HAP-1 (cell line): ENCODE measurements at regions of chr6 and their contacts with region 1.

Region 1: GRCh38 chr6:107689951-107690642 is 134.0 kb downstream of the SCML4 start:
- DNase-seq: peak in 1 of 2 experiments; percentile 21
- H3K4me3 ChIP-seq: no peak overlapping the region
- H3K4me1 ChIP-seq: no peaks in the 10 kb centered on the region
- H3K27me3 ChIP-seq: no peaks in the 10 kb centered on the region

Region 2: GRCh38 chr6:107847844-107848802 is 158.0 kb after region 1 on chr6:
- in situ Hi-C with region 1: loop called (anchors 10 kb)
- DNase-seq: peak; percentile 82 to 94
- H3K4me3 ChIP-seq: peak overlapping the region; percentile 18
- H3K4me1 ChIP-seq: peaks cover 6% of the 10 kb centered on the region
- H3K27me3 ChIP-seq: no peaks in the 10 kb centered on the region

Region 3: GRCh38 chr6:108302386-108302785 is 612.3 kb after region 1 on chr6:
- in situ Hi-C with region 1: no loop called
- DNase-seq: no peak
- H3K4me3 ChIP-seq: no peak overlapping the region
- H3K4me1 ChIP-seq: peaks cover 14% of the 10 kb centered on the region
- H3K27me3 ChIP-seq: no peaks in the 10 kb centered on the region